Right lobe of liver (tissue), 6 donors: ENCODE measurements at regions of chr17 and their contacts with region 1.

Region 1: DNA sequence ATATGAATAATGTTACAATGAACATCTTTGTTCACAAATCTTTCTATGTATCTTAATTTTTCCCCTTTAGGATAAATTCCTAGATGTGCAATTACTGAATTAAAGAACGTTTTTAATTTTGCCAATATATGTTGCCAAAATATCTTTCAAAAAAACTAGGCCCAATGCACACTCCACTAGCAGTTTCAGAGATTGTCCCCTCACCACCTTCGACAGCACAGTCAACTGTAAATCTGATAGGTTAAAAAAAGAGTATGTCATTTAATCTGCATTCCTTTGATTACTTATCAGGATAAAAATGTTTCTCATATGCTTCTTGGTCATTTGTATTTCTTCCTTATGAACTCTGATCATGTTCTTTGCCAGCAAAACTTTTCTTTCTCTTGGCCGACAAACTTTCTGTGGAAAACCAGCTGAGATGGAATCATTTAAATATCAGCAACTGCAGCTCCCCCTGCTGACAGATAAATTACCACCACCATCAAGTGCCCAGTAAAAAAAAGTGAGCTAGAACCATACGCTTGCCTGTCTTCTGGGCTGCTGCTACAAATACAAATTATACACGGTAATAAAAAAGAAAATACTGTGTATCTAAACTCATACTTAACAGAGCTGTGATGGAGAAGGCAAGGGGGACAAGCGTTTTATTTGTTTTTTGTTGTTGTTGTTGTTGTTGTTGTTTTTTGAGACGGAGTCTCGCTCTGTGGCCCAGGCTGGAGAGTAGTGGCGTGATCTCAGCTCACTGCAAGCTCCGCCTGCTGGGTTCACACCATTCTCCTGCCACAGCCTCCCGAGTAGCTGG is 19.6 kb upstream of the KANSL1 start:
- DNase-seq: peak in 1 of 3 donors; percentile 53
- ATAC-seq: peak; percentile 86 to 97 (median 92)
- H3K4me3 ChIP-seq: no peak overlapping the region
- H3K27ac ChIP-seq: no peak overlapping the region
- H3K4me1 ChIP-seq: peaks cover 0 to 4% (median 0%) of the 10 kb centered on the region in 4 donors
- H3K27me3 ChIP-seq: no peaks in the 10 kb centered on the region
- CTCF ChIP-seq: peak; percentile 65 to 93 (median 84)
- POLR2A ChIP-seq: no peak

Region 2: DNA sequence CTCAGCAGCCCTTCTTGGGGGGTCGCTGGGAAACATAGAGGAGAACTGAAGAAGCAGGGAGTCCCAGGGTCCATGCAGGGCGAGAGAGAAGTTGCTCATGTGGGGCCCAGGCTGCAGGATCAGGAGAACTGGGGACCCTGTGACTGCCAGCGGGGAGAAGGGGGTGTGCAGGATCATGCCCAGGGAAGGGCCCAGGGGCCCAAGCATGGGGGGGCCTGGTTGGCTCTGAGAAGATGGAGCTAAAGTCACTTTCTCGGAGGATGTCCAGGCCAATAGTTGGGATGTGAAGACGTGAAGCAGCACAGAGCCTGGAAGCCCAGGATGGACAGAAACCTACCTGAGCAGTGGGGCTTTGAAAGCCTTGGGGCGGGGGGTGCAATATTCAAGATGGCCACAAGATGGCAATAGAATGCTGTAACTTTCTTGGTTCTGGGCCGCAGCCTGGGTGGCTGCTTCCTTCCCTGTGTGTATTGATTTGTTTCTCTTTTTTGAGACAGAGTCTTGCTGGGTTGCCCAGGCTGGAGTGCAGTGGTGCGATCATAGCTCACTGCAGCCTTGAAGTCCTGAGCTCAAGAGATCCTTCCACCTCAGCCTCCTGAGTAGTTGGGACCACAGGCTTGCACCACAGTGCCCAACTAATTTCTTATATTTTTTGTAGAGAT is 210.4 kb before region 1 on chr17:
- intact Hi-C with region 1: loop called in 1 of 2 experiments (anchors 10 kb)
- DNase-seq: peak; percentile 64 to 69 (median 66)
- ATAC-seq: peak; percentile 85 to 93 (median 90)
- H3K4me3 ChIP-seq: no peak overlapping the region
- H3K27ac ChIP-seq: no peak overlapping the region
- H3K4me1 ChIP-seq: peaks cover 0 to 14% (median 3%) of the 10 kb centered on the region in 4 donors
- H3K27me3 ChIP-seq: no peaks in the 10 kb centered on the region
- CTCF ChIP-seq: peak; percentile 93 to 97 (median 96)
- POLR2A ChIP-seq: no peak

Region 3: GRCh38 chr17:46092991-46093390 is 119.8 kb before region 1 on chr17:
- intact Hi-C with region 1: no loop called
- DNase-seq: no peak
- ATAC-seq: no peak
- H3K4me3 ChIP-seq: no peak overlapping the region
- H3K27ac ChIP-seq: no peak overlapping the region
- H3K4me1 ChIP-seq: peaks cover 0 to 6% (median 0%) of the 10 kb centered on the region in 4 donors
- H3K27me3 ChIP-seq: no peaks in the 10 kb centered on the region
- CTCF ChIP-seq: no peak
- POLR2A ChIP-seq: no peak